ENCODE measurements at regions of chr7 and their contacts with region 1.

Region 1: GRCh38 chr7:134690016-134690415 is 43.4 kb downstream of the BPGM start:
- DNase-seq: no peak
- H3K4me3 Mint-ChIP-seq: no peak overlapping the region
- H3K27ac Mint-ChIP-seq: no peak overlapping the region
- H3K4me1 Mint-ChIP-seq: peaks cover 6% of the 10 kb centered on the region
- H3K27me3 Mint-ChIP-seq: no peaks in the 10 kb centered on the region
- CTCF ChIP-seq: peak; percentile 44

Region 2: DNA sequence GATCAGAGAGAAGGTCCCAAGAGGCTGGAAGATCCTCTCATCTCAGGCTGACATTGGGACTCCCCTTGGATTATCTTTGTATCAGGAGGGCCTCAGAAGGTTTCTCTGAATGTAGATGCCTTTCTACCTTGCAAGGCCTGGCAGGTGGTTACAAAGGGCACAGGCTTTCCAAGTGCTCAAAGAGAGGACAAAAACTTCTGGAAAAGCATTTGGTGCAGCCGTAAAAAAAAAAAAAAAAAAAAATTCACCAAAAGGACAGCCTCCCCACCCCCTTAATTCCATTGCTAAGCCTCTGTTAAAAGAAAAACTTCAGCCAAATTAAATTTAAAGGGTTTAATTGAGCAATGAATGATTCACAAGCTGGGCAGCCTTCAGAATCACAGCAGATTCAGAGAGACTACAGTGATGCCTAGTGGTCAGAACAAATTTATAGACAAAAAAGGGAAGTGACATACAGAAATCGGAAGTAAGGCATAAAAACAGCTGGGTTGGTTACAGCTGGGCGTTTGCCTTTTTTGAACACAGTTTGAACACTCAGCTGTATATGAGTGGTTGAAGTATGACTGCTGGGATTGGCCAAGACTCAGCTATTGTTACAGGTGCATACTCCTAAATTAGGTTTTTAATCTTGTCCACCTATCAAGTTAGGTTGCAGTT is 605.4 kb before region 1 on chr7:
- CTCF ChIA-PET with region 1: no interaction called
- POLR2A ChIA-PET with region 1: no interaction called
- intact Hi-C with region 1: no loop called
- DNase-seq: no peak
- H3K4me3 Mint-ChIP-seq: no peak overlapping the region
- H3K27ac Mint-ChIP-seq: no peak overlapping the region
- H3K4me1 Mint-ChIP-seq: no peaks in the 10 kb centered on the region
- H3K27me3 Mint-ChIP-seq: no peaks in the 10 kb centered on the region
- CTCF ChIP-seq: no peak

Region 3: GRCh38 chr7:134632937-134633540 is 57.0 kb before region 1 on chr7:
- CTCF ChIA-PET with region 1: interaction called, 10 read pairs
- POLR2A ChIA-PET with region 1: no interaction called
- intact Hi-C with region 1: no loop called
- DNase-seq: peak; percentile 61
- H3K4me3 Mint-ChIP-seq: no peak overlapping the region
- H3K27ac Mint-ChIP-seq: no peak overlapping the region
- H3K4me1 Mint-ChIP-seq: peaks cover 14% of the 10 kb centered on the region
- H3K27me3 Mint-ChIP-seq: no peaks in the 10 kb centered on the region
- CTCF ChIP-seq: peak; percentile 73

Region 4: DNA sequence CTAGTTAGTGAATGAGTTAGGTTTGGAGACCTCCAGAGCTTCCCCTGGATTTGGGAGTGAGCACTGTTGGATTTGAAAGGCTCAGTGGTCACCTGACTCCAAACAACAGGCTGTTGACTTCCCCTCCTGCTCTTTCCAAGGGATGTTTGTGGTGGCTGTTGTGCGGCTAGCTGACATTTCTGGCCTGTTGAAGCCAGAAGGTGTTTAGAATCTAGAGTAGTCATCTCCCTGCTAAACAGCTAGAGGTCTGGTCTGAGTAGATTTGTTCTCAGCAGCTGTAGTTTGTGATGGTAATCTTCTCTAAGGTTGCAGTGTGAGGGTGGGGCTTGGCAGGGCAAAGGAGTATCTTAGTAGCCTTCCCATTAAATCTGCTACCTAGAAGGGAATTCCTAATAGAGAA is 13.3 kb before region 1 on chr7:
- CTCF ChIA-PET with region 1: interaction called, 11 read pairs
- POLR2A ChIA-PET with region 1: no interaction called
- intact Hi-C with region 1: no loop called
- DNase-seq: no peak
- H3K4me3 Mint-ChIP-seq: no peak overlapping the region
- H3K27ac Mint-ChIP-seq: no peak overlapping the region
- H3K4me1 Mint-ChIP-seq: peaks cover 6% of the 10 kb centered on the region
- H3K27me3 Mint-ChIP-seq: no peaks in the 10 kb centered on the region
- CTCF ChIP-seq: no peak

Region 5: DNA sequence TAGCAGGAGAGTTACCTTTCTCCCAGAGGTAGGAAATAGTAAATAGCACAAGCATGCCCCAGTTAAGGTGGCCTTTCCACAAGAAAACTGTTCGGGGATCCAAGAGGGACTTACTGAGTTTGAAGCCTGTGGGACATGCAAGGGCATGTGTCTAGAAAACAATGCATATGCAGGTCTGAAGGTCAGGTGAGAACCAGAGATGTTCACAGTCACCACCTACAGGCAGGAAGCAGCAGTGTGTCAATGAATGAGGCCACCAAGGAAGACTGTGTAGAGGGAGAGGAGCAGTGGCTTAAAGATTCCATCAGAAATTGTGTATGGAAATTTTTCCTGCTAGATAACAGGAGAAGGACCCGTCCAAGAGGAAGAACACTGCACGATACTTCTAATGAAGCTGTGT is 155.5 kb after region 1 on chr7:
- CTCF ChIA-PET with region 1: interaction called, 16 read pairs
- POLR2A ChIA-PET with region 1: interaction called, 4 read pairs
- intact Hi-C with region 1: no loop called
- DNase-seq: peak; percentile 66
- H3K4me3 Mint-ChIP-seq: peak overlapping the region; percentile 30
- H3K27ac Mint-ChIP-seq: peak overlapping the region; percentile 92
- H3K4me1 Mint-ChIP-seq: peaks cover 14% of the 10 kb centered on the region
- H3K27me3 Mint-ChIP-seq: no peaks in the 10 kb centered on the region
- CTCF ChIP-seq: peak; percentile 43

Region 6: GRCh38 chr7:134936893-134937525 is 247.0 kb after region 1 on chr7:
- CTCF ChIA-PET with region 1: interaction called, 96 read pairs
- POLR2A ChIA-PET with region 1: interaction called, 4 read pairs
- intact Hi-C with region 1: no loop called
- DNase-seq: no peak
- H3K4me3 Mint-ChIP-seq: no peak overlapping the region
- H3K27ac Mint-ChIP-seq: peak overlapping the region; percentile 25
- H3K4me1 Mint-ChIP-seq: peaks cover 13% of the 10 kb centered on the region
- H3K27me3 Mint-ChIP-seq: no peaks in the 10 kb centered on the region
- CTCF ChIP-seq: no peak

Region 7: DNA sequence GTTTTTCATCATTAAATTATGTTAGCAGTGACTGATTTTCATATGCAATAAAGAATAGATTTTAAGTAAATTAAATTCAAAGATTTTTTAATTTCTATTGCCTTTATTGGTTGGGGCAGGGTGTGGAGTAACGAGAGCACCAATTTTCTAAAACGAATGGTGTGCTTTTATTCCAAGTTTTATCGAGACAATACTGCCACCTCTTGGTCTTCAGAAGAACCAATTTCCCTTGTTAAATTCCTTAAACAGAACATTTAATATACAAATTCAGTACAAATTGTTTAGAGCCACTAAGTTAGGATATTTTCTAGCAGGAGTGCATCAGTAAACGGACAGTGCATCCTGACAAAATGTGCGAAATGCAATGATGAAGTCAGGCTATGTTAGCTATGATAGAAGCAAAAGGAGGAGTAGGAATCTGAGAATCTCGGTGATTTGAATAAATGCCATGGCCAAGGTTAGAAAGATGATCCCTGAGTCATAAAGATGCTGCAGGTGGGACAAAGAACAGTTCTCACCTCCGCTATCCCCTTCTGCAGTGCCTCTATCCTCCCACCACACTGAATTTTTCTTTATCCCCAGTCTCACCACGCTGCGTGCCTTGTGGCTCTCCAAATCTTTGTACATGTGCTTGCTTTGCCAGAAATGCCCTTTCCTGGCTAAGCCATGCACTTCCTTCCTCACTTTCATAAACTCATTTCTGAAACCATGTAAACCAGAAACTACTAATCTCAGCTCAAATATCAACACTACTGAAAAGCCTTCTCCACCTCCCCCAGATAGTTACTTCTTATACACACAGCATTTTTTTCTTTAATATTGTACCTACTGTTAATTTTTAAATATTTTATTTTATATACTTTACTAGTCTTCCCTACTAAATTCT is 264.4 kb after region 1 on chr7:
- CTCF ChIA-PET with region 1: interaction called, 62 read pairs
- POLR2A ChIA-PET with region 1: interaction called, 6 read pairs
- intact Hi-C with region 1: loop called (anchors 1 kb)
- DNase-seq: peak; percentile 46
- H3K4me3 Mint-ChIP-seq: no peak overlapping the region
- H3K27ac Mint-ChIP-seq: peak overlapping the region; percentile 43
- H3K4me1 Mint-ChIP-seq: no peaks in the 10 kb centered on the region
- H3K27me3 Mint-ChIP-seq: no peaks in the 10 kb centered on the region
- CTCF ChIP-seq: peak; percentile 58

Region 8: DNA sequence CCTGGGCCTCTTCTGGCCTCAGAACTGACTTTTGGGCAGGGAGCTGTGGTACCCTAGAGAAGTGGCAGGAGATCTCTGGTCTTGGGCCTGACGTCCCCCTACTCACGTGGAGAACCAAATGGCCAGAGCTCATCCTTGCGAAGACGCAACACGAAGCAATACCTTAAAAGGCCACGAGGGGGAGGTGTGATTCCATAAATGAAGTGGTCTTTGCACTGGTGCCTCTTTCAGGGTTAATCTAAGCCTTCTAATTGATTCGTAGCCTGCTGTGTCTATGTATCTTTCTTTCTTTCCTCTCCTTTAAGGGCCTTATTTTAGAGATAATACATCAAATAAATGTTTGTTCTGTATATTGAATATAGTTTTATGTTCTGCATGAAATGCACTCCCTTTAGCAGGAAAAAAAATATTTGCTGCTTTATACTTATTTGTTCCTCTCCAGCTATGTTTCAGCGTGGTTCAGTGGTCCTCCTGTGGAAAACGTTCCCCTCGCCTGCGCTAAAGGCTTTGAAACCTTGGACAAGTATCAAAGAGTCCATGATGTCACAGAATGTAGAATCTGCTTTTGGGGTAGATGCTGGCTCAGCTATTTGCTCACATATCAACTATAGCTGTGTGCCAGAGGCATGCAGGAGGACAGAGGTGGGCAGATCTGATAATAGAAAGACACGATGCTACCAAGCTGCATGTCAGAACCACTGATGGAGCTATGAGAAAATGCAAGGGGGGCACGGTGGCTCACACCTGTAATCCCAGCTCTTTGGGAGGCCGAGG is 584.7 kb after region 1 on chr7:
- CTCF ChIA-PET with region 1: interaction called, 17 read pairs
- POLR2A ChIA-PET with region 1: interaction called, 3 read pairs
- intact Hi-C with region 1: loop called (anchors 10 kb)
- DNase-seq: peak; percentile 82
- H3K4me3 Mint-ChIP-seq: no peak overlapping the region
- H3K27ac Mint-ChIP-seq: no peak overlapping the region
- H3K4me1 Mint-ChIP-seq: no peaks in the 10 kb centered on the region
- H3K27me3 Mint-ChIP-seq: peaks cover 1% of the 10 kb centered on the region
- CTCF ChIP-seq: peak; percentile 85

Measured in MCF 10A (cell line).